Psoas muscle (tissue), 8 donors: ENCODE measurements at regions of chr13 and their contacts with region 1.

Region 1: DNA sequence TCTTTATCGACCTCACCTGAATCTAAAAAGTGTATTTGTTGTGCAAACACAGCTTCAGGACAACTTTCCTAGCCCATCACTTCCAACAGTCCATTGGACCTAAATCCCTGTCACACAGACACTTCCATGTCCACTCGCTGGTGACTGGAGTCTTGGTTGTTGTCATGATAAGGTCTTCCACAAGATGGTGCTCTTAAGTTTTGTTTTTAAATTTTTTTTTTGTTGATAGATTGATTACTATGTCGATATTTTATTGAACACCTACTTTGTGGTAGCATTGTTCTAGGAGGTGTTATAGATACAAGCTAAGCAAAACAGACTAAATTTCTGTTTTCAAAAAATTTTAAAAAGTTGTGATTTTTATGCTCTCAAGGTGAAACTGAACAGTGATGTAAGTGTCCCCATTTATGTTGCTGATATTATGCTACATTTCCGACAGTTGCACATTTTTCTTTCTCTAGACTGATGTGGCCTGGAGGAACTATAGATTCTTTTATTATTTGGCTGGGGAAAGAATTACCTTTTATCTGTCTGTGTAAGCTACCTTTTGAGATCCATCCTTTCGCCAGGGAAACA is 8.1 kb upstream of the ERICH6B start:
- DNase-seq: no peak
- ATAC-seq: peak in 1 of 4 donors; percentile 47
- H3K4me3 ChIP-seq: no peak overlapping the region
- H3K27ac ChIP-seq: no peak overlapping the region
- H3K4me1 ChIP-seq: peaks cover 9% of the 10 kb centered on the region
- H3K27me3 ChIP-seq: peaks cover 0 to 7% (median 4%) of the 10 kb centered on the region in 3 donors
- CTCF ChIP-seq: peak; percentile 57

Region 2: GRCh38 chr13:46010148-46010547 is 386.5 kb after region 1 on chr13:
- intact Hi-C with region 1: loop called in 1 of 2 experiments (anchors 10 kb)
- DNase-seq: no peak
- ATAC-seq: no peak
- H3K4me3 ChIP-seq: no peak overlapping the region
- H3K27ac ChIP-seq: no peak overlapping the region
- H3K4me1 ChIP-seq: no peaks in the 10 kb centered on the region
- H3K27me3 ChIP-seq: no peaks in the 10 kb centered on the region
- CTCF ChIP-seq: peak; percentile 10

Region 3: GRCh38 chr13:46126552-46127357 is 503.2 kb after region 1 on chr13:
- intact Hi-C with region 1: loop called in 1 of 2 experiments (anchors 10 kb)
- DNase-seq: peak; percentile 41 to 63
- ATAC-seq: peak; percentile 68 to 80 (median 76)
- H3K4me3 ChIP-seq: no peak overlapping the region
- H3K27ac ChIP-seq: no peak overlapping the region
- H3K4me1 ChIP-seq: no peaks in the 10 kb centered on the region
- H3K27me3 ChIP-seq: no peaks in the 10 kb centered on the region
- CTCF ChIP-seq: peak; percentile 61

Region 4: GRCh38 chr13:46149272-46150133 is 525.9 kb after region 1 on chr13:
- intact Hi-C with region 1: loop called in 1 of 2 experiments (anchors 10 kb)
- DNase-seq: no peak
- ATAC-seq: no peak
- H3K4me3 ChIP-seq: no peak overlapping the region
- H3K27ac ChIP-seq: no peak overlapping the region
- H3K4me1 ChIP-seq: no peaks in the 10 kb centered on the region
- H3K27me3 ChIP-seq: peaks cover 0 to 5% (median 0%) of the 10 kb centered on the region in 3 donors
- CTCF ChIP-seq: no peak